Mammary epithelial cell (primary cell): ENCODE measurements at regions of chr22 and their contacts with region 1.

Region 1: DNA sequence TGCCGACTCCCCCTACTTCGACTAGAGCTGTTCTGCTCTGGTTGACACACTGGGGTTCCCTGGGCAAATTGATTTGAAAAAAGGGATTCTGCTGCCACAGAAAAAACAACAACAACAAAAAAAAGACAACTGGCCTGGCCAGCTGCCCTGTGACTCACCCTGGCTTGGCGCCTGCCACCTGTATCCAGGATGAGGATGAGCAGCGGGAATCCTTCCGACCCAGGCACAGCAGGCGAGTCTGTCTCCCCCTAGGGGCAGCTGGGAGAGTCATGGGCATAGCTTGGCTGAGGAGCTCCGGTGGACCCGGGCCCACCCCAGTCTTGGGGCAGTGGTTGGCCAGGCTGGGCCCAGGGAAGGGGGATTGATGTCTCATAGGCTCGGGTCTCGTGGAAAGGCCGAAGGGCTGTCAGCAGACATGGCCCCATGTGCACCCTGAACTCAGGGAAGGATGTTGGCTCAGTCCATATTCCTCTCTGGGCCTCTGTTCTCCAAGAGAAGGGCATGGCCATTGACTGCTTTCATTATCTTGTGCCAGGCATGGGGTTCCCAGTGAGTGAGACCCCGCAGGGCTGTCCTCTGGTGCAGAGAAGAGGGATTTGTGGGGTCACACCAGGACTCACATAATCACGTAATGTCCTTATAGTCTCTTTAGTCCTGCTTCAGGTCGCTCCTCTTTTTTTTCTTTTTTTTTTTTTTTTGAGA is 10.4 kb upstream of the SUN2 start:
- DNase-seq: peak; percentile 65
- H3K4me3 ChIP-seq: no peak overlapping the region
- H3K27ac ChIP-seq: no peak overlapping the region
- H3K4me1 ChIP-seq: peaks cover 13% of the 10 kb centered on the region
- H3K27me3 ChIP-seq: no peaks in the 10 kb centered on the region
- CTCF ChIP-seq: peak; percentile 96 to 98

Region 2: GRCh38 chr22:38733329-38733723 is 32.9 kb before region 1 on chr22:
- CTCF ChIA-PET with region 1: interaction called, 4 read pairs
- dilution Hi-C with region 1: no loop called
- in situ Hi-C with region 1: no loop called
- intact Hi-C with region 1: loop called (anchors 1 kb)
- DNase-seq: no peak
- H3K4me3 ChIP-seq: no peak overlapping the region
- H3K27ac ChIP-seq: no peak overlapping the region
- H3K4me1 ChIP-seq: peaks cover 13% of the 10 kb centered on the region
- H3K27me3 ChIP-seq: no peaks in the 10 kb centered on the region
- CTCF ChIP-seq: peak; percentile 63 to 87

Region 3: GRCh38 chr22:38802671-38803121 is 36.5 kb after region 1 on chr22:
- CTCF ChIA-PET with region 1: interaction called, 3 read pairs
- dilution Hi-C with region 1: no loop called
- in situ Hi-C with region 1: no loop called
- intact Hi-C with region 1: loop called (anchors 2 kb)
- DNase-seq: peak; percentile 97
- H3K4me3 ChIP-seq: no peak overlapping the region
- H3K27ac ChIP-seq: peak overlapping the region; percentile 20
- H3K4me1 ChIP-seq: peaks cover 7% of the 10 kb centered on the region
- H3K27me3 ChIP-seq: no peaks in the 10 kb centered on the region
- CTCF ChIP-seq: no peak

Region 4: DNA sequence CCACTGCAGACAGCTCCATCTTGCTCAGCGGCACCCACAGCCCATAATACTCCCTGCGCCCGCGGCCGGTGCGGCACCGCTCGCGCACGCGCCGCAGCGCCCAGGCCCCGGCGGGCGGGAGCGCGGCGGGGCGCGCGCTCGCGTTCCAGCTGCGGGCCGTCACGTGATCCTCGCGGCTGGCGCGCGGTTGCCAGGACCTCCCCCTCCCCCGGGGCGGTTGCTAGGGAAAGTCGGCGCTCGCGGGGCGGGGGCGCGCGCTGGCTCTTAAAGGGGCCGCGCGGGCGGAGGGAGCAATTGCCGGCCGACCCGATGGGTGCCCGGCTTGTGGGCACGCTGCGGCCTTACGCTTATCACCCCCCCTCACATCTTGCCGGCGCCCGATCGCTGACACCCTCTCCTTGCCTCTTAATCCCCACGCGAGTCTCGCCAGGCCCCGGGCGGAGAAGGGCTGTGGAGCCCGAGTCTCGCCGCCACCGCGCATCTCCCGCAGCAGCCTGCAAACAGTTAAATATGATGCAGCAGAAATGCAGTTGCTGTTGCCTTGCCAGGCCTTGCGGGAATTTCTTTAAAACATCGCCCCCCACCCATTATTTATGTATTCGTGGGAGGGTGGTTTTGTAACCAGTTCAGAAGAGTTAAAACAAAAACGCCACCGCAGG is 106.1 kb after region 1 on chr22 and contains the start of gene CBX6:
- CTCF ChIA-PET with region 1: interaction called, 7 read pairs
- dilution Hi-C with region 1: no loop called
- in situ Hi-C with region 1: no loop called
- intact Hi-C with region 1: loop called (anchors 1 kb)
- DNase-seq: peak; percentile 81
- H3K4me3 ChIP-seq: peak within 1 kb of the TSS; percentile 68 to 83 (median 76)
- H3K27ac ChIP-seq: peak within 1 kb of the TSS; percentile 36
- H3K4me1 ChIP-seq: peaks cover 27% of the 10 kb centered on the region
- H3K27me3 ChIP-seq: no peaks in the 10 kb centered on the region
- CTCF ChIP-seq: no peak
- total RNA-seq, gene CBX6: 32.3 to 55.7 TPM

Region 5: GRCh38 chr22:39117585-39118191 is 351.5 kb after region 1 on chr22:
- CTCF ChIA-PET with region 1: interaction called, 6 read pairs
- dilution Hi-C with region 1: no loop called
- in situ Hi-C with region 1: no loop called
- intact Hi-C with region 1: loop called (anchors 2 kb)
- DNase-seq: peak; percentile 42
- H3K4me3 ChIP-seq: no peak overlapping the region
- H3K27ac ChIP-seq: no peak overlapping the region
- H3K4me1 ChIP-seq: peaks cover 10% of the 10 kb centered on the region
- H3K27me3 ChIP-seq: no peaks in the 10 kb centered on the region
- CTCF ChIP-seq: peak; percentile 52 to 67